Lower leg skin (tissue), 4 donors: ENCODE measurements at regions of chr2 and their contacts with region 1.

Region 1: GRCh38 chr2:13495051-13495450 is 778.3 kb downstream of the TRIB2 start:
- DNase-seq: no peak
- H3K4me3 ChIP-seq: no peak overlapping the region
- CTCF ChIP-seq: no peak
- POLR2A ChIP-seq: no peak

Region 2: GRCh38 chr2:14720319-14720718 is 1225.3 kb after region 1 on chr2:
- intact Hi-C with region 1: loop called (anchors 5 kb)
- DNase-seq: no peak
- H3K4me3 ChIP-seq: no peak overlapping the region
- CTCF ChIP-seq: no peak
- POLR2A ChIP-seq: no peak